HepG2 (cell line): ENCODE measurements at regions of chr17 and their contacts with region 1.

Region 1: DNA sequence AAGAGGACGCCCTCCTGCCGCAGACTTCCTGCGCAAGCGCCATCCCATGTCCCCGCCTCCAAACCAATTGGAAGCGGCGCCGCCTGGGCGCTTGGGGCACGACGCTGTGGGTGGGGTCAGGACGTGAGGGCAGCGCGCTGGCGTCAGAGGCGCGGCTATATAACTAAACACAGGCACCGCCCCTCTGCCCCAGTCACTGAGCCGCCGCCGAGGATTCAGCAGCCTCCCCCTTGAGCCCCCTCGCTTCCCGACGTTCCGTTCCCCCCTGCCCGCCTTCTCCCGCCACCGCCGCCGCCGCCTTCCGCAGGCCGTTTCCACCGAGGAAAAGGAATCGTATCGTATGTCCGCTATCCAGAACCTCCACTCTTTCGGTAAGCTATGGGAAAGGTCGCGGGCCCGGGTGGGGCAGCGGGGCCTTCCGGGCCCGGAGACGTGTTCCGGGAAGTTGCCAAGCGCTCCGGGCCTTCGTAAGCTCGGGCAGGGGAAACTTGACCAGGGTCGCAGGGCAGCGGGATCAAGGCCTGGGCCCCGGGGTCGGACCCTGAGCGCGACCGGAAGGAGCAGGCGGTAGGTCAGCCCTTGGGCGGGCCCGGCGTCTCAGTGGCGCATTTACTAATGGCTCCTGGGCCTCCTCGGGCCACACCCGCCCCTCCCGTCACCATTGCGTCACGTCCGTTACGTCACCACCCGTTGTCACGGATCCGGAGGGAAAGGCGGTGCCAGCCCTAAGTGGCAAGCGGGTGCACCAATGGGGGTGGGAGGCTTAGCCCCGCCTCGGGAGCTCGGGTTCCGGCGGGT is at the start of gene EIF1:
- DNase-seq: peak; percentile 100
- ATAC-seq: peak; percentile 82
- H3K4me3 ChIP-seq: peak within 1 kb of the TSS; percentile 88 to 99 (median 97)
- H3K27ac ChIP-seq: peak within 1 kb of the TSS; percentile 99
- H3K4me1 ChIP-seq: peaks cover 29% of the 10 kb centered on the region
- H3K27me3 ChIP-seq: no peaks in the 10 kb centered on the region; a peak in 2 of 5 replicates
- CTCF ChIP-seq: no peak; the same call in 1 of the 2 replicates
- EP300 ChIP-seq: peak; percentile 49 to 96
- POLR2A ChIP-seq: peak; percentile 95 to 98
- RAD21 ChIP-seq: peak; percentile 39; the same call in 1 of the 2 replicates
- total RNA-seq, gene EIF1: 147 and 199 TPM in 2 replicates

Region 2: DNA sequence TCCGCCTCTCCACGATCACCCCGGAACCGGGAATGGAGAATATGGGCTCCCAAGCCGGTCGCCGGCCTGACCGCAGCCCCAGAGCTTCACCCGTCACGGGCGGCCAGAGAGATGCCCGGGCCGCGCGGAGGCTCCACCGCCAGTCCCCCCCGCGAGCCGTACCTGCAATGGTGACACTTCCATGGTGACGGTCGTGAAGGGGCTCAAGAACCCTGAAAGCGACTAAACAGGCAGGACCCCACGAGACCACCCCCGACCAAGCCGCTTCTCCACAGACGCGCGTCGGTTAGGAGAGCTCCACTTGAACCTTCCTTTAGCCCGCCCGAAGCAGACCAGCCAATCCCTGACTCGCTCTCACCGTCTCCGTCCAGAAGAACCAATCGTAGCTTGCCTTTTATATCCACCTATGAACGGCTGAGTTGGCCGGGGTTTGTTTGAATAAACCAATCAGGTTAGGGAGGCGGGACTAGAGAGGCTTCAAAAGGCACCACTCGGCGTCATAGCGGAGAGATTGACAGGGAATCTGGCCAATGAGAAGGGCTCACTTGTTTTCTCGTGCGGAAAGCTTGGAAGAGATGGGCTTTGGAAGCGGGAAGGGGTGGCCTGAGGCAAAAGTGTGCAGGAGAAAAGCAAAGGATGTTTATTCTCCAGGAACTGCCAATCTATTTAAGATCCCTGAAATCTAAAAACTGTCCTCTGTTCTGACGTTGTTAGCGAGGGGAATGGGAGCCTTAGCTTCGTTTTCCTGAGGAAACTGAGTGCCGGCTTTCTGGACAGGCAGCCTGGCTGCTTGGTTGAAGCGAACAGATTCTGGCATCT is 1271.1 kb before region 1 on chr17 and contains the start of gene TOP2A:
- CTCF ChIA-PET with region 1: no interaction called
- POLR2A ChIA-PET with region 1: interaction called, 16 read pairs
- in situ Hi-C with region 1: no loop called
- intact Hi-C with region 1: no loop called
- DNase-seq: peak; percentile 100
- ATAC-seq: peak; percentile 90
- H3K4me3 ChIP-seq: peak within 1 kb of the TSS; percentile 89 to 98 (median 96)
- H3K27ac ChIP-seq: peak within 1 kb of the TSS; percentile 82
- H3K4me1 ChIP-seq: peaks cover 79% of the 10 kb centered on the region
- H3K27me3 ChIP-seq: no peaks in the 10 kb centered on the region
- CTCF ChIP-seq: no peak
- EP300 ChIP-seq: 0 out of 4 replicates have a peak, but pooled peaks of 1 of the 2 experiments have one; percentile 12
- POLR2A ChIP-seq: peak; percentile 92 to 93
- RAD21 ChIP-seq: no peak; the same call in 1 of the 2 replicates
- total RNA-seq, gene TOP2A: 327 and 614 TPM in 2 replicates

Region 3: DNA sequence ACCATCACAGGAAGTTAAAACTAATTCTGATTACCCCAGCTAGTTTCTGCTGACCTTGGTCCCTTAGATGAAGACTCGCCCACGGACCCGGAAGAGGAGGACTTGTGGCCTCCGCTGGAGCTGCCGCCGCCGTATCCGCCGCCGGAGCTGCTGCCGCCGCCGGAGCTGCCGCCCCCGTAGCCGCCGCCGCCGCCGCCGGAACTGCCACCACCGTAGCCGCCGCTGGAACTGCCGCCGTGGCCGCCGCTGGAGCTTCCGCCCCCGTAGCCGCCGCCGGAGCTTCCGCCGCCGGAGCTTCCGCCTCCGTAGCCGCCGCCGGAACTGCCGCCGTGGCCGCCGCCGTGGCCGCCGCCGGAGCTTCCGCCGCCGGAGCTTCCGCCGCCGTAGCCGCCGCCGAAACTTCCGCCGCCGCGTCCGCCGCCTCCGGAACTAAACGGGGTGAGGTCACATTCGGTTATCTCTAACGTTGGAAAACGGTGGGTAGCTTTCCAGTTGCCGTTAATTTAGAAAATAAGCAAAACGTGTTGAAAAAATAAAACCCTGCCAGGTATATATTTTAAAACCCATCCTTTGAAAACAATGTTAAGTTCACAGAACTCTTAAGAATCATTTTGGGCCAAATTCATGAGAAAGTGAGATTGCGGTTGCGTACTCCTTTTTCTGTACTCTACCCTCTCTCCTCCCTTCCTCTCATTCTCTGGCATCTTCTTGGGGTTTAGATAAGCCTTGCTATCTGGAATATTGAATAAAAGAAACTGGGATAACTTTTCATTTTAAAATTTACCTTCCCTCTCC is 870.0 kb before region 1 on chr17:
- CTCF ChIA-PET with region 1: no interaction called
- POLR2A ChIA-PET with region 1: interaction called, 24 read pairs
- in situ Hi-C with region 1: no loop called
- intact Hi-C with region 1: no loop called
- DNase-seq: peak; percentile 68
- ATAC-seq: peak; percentile 97
- H3K4me3 ChIP-seq: peak overlapping the region; percentile 74 to 93 (median 81)
- H3K27ac ChIP-seq: peak overlapping the region; percentile 82
- H3K4me1 ChIP-seq: peaks cover 33% of the 10 kb centered on the region
- H3K27me3 ChIP-seq: no peaks in the 10 kb centered on the region; a peak in 1 of 5 replicates
- CTCF ChIP-seq: no peak
- EP300 ChIP-seq: no peak
- POLR2A ChIP-seq: peak; percentile 72 to 76
- RAD21 ChIP-seq: peak; percentile 61; the same call in 1 of the 2 replicates

Region 4: GRCh38 chr17:41705271-41705991 is 16.5 kb after region 1 on chr17:
- CTCF ChIA-PET with region 1: no interaction called
- POLR2A ChIA-PET with region 1: interaction called, 82 read pairs
- in situ Hi-C with region 1: no loop called
- intact Hi-C with region 1: no loop called
- DNase-seq: peak; percentile 39
- ATAC-seq: peak; percentile 37
- H3K4me3 ChIP-seq: peak overlapping the region in 2 of 3 experiments; percentile 8 to 29; a peak in 2 of 6 replicates
- H3K27ac ChIP-seq: no peak overlapping the region
- H3K4me1 ChIP-seq: peaks cover 35% of the 10 kb centered on the region
- H3K27me3 ChIP-seq: peaks cover 0 to 32% of the 10 kb centered on the region in 2 experiments; a peak in 3 of 5 replicates
- CTCF ChIP-seq: no peak
- EP300 ChIP-seq: no peak
- POLR2A ChIP-seq: no peak
- RAD21 ChIP-seq: no peak

Region 5: GRCh38 chr17:41786227-41787020 is 97.5 kb after region 1 on chr17 and contains the start of gene JUP:
- CTCF ChIA-PET with region 1: no interaction called
- POLR2A ChIA-PET with region 1: interaction called, 32 read pairs
- in situ Hi-C with region 1: no loop called
- intact Hi-C with region 1: no loop called
- DNase-seq: peak; percentile 99
- ATAC-seq: peak; percentile 97
- H3K4me3 ChIP-seq: peak within 1 kb of the TSS; percentile 60 to 90 (median 71)
- H3K27ac ChIP-seq: peak within 1 kb of the TSS; percentile 62
- H3K4me1 ChIP-seq: peaks cover 34% of the 10 kb centered on the region
- H3K27me3 ChIP-seq: no peaks in the 10 kb centered on the region; a peak in 1 of 5 replicates
- CTCF ChIP-seq: peak; percentile 83
- EP300 ChIP-seq: no peak
- POLR2A ChIP-seq: peak; percentile 89 to 97
- RAD21 ChIP-seq: peak; percentile 93
- total RNA-seq, gene JUP: 20.6 and 20.9 TPM in 2 replicates

Region 6: GRCh38 chr17:41918314-41919164 is 229.6 kb after region 1 on chr17 and contains the start of gene ACLY:
- CTCF ChIA-PET with region 1: no interaction called
- POLR2A ChIA-PET with region 1: interaction called, 24 read pairs
- in situ Hi-C with region 1: no loop called
- intact Hi-C with region 1: no loop called
- DNase-seq: peak; percentile 97
- ATAC-seq: peak; percentile 93
- H3K4me3 ChIP-seq: peak within 1 kb of the TSS; percentile 96 to 98 (median 97)
- H3K27ac ChIP-seq: peak within 1 kb of the TSS; percentile 81
- H3K4me1 ChIP-seq: peaks cover 71% of the 10 kb centered on the region
- H3K27me3 ChIP-seq: no peaks in the 10 kb centered on the region; a peak in 1 of 5 replicates
- CTCF ChIP-seq: no peak
- EP300 ChIP-seq: 0 out of 4 replicates have a peak, but pooled peaks of 1 of the 2 experiments have one; percentile 45
- POLR2A ChIP-seq: peak; percentile 88 to 97
- RAD21 ChIP-seq: no peak; the same call in none of the 2 replicates
- total RNA-seq, gene ACLY: 218 and 277 TPM in 2 replicates